CD8-positive, alpha-beta memory T cell (primary cell): ENCODE measurements at regions of chr20 and their contacts with region 1.

Region 1: DNA sequence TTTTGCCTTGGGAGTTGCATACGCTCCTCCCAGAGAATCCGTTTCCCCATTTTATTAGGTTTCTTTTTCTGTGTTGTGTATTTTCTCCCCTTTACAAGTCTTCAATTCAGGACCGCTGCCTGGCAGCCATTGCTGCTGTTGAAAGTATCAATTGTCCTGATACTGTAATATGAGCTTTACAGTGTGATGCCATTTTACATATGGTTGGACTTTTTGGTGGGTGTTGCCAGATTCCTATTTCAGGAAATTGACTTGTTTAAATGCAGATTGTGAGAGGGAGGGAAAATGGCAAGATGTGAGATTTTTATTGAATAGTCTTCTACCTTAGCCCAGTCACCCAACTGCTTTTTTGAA is 1.2 kb downstream of the PANK2 start:
- DNase-seq: no peak
- H3K4me3 ChIP-seq: peak overlapping the region; percentile 84
- H3K4me3 Mint-ChIP-seq: peak overlapping the region; percentile 97 to 100 (median 98)
- H3K27ac ChIP-seq: peak overlapping the region; percentile 85
- H3K27ac Mint-ChIP-seq: peak overlapping the region; percentile 91 to 99 (median 98)
- H3K4me1 ChIP-seq: peaks cover 49% of the 10 kb centered on the region
- H3K4me1 Mint-ChIP-seq: peaks cover 52 to 68% (median 65%) of the 10 kb centered on the region in 3 donors
- H3K27me3 ChIP-seq: no peaks in the 10 kb centered on the region
- H3K27me3 Mint-ChIP-seq: no peaks in the 10 kb centered on the region

Region 2: GRCh38 chr20:3679749-3680700 is 210.3 kb before region 1 on chr20:
- CTCF ChIA-PET with region 1: no interaction called
- POLR2A ChIA-PET with region 1: no interaction called
- DNase-seq: no peak
- H3K4me3 ChIP-seq: no peak overlapping the region
- H3K4me3 Mint-ChIP-seq: no peak overlapping the region
- H3K27ac ChIP-seq: no peak overlapping the region
- H3K27ac Mint-ChIP-seq: peak overlapping the region in 1 of 8 donors; percentile 48
- H3K4me1 ChIP-seq: no peaks in the 10 kb centered on the region
- H3K4me1 Mint-ChIP-seq: peaks cover 0 to 12% (median 4%) of the 10 kb centered on the region in 3 donors
- H3K27me3 ChIP-seq: peaks cover 11% of the 10 kb centered on the region
- H3K27me3 Mint-ChIP-seq: peaks cover 37 to 59% of the 10 kb centered on the region in 2 donors

Region 3: GRCh38 chr20:3875378-3875974 is 14.9 kb before region 1 on chr20:
- CTCF ChIA-PET with region 1: no interaction called
- POLR2A ChIA-PET with region 1: interaction called, 11 read pairs
- DNase-seq: no peak
- H3K4me3 ChIP-seq: no peak overlapping the region
- H3K4me3 Mint-ChIP-seq: no peak overlapping the region
- H3K27ac ChIP-seq: no peak overlapping the region
- H3K27ac Mint-ChIP-seq: peak overlapping the region in 1 of 8 donors; percentile 43
- H3K4me1 ChIP-seq: no peaks in the 10 kb centered on the region
- H3K4me1 Mint-ChIP-seq: peaks cover 6 to 18% (median 12%) of the 10 kb centered on the region in 3 donors
- H3K27me3 ChIP-seq: no peaks in the 10 kb centered on the region
- H3K27me3 Mint-ChIP-seq: no peaks in the 10 kb centered on the region

Region 4: GRCh38 chr20:3908667-3909066 is 18.3 kb after region 1 on chr20:
- CTCF ChIA-PET with region 1: interaction called, 4 read pairs
- POLR2A ChIA-PET with region 1: interaction called, 13 read pairs
- DNase-seq: no peak
- H3K4me3 ChIP-seq: no peak overlapping the region
- H3K4me3 Mint-ChIP-seq: peak overlapping the region in 1 of 7 donors; percentile 39
- H3K27ac ChIP-seq: no peak overlapping the region
- H3K27ac Mint-ChIP-seq: peak overlapping the region in 6 of 8 donors; percentile 64 to 85 (median 70)
- H3K4me1 ChIP-seq: peaks cover 22% of the 10 kb centered on the region
- H3K4me1 Mint-ChIP-seq: peaks cover 45 to 75% (median 54%) of the 10 kb centered on the region in 3 donors
- H3K27me3 ChIP-seq: no peaks in the 10 kb centered on the region
- H3K27me3 Mint-ChIP-seq: no peaks in the 10 kb centered on the region

Region 5: GRCh38 chr20:3935956-3936340 is 45.6 kb after region 1 on chr20:
- CTCF ChIA-PET with region 1: no interaction called
- POLR2A ChIA-PET with region 1: no interaction called
- DNase-seq: no peak
- H3K4me3 ChIP-seq: no peak overlapping the region
- H3K4me3 Mint-ChIP-seq: no peak overlapping the region
- H3K27ac ChIP-seq: no peak overlapping the region
- H3K27ac Mint-ChIP-seq: peak overlapping the region in 4 of 8 donors; percentile 28 to 79 (median 64)
- H3K4me1 ChIP-seq: peaks cover 23% of the 10 kb centered on the region
- H3K4me1 Mint-ChIP-seq: peaks cover 15 to 38% (median 17%) of the 10 kb centered on the region in 3 donors
- H3K27me3 ChIP-seq: no peaks in the 10 kb centered on the region
- H3K27me3 Mint-ChIP-seq: no peaks in the 10 kb centered on the region